ENCODE measurements at regions of chr11 and their contacts with region 1.

Region 1: GRCh38 chr11:62534779-62535545 is 11.6 kb downstream of the AHNAK start:
- DNase-seq: no peak
- H3K4me3 ChIP-seq: no peak overlapping the region
- H3K4me3 Mint-ChIP-seq: no peak overlapping the region
- H3K27ac ChIP-seq: peak overlapping the region in 1 of 2 donors; percentile 18
- H3K27ac Mint-ChIP-seq: peak overlapping the region in 2 of 7 donors; percentile 7 to 48
- H3K4me1 ChIP-seq: peaks cover 19 to 22% of the 10 kb centered on the region in 2 donors
- H3K4me1 Mint-ChIP-seq: peaks cover 21% of the 10 kb centered on the region
- H3K27me3 ChIP-seq: no peaks in the 10 kb centered on the region
- H3K27me3 Mint-ChIP-seq: peaks cover 0 to 5% (median 0%) of the 10 kb centered on the region in 3 donors
- CTCF ChIP-seq: no peak

Region 2: GRCh38 chr11:62383822-62384221 is 151.1 kb before region 1 on chr11:
- intact Hi-C with region 1: no loop called
- DNase-seq: no peak
- H3K4me3 ChIP-seq: no peak overlapping the region
- H3K4me3 Mint-ChIP-seq: no peak overlapping the region
- H3K27ac ChIP-seq: no peak overlapping the region
- H3K27ac Mint-ChIP-seq: no peak overlapping the region
- H3K4me1 ChIP-seq: peaks cover 5 to 6% of the 10 kb centered on the region in 2 donors
- H3K4me1 Mint-ChIP-seq: peaks cover 5% of the 10 kb centered on the region
- H3K27me3 ChIP-seq: no peaks in the 10 kb centered on the region
- H3K27me3 Mint-ChIP-seq: peaks cover 0 to 1% (median 0%) of the 10 kb centered on the region in 3 donors
- CTCF ChIP-seq: no peak

Region 3: GRCh38 chr11:62567018-62567633 is 32.2 kb after region 1 on chr11:
- intact Hi-C with region 1: loop called in 1 of 2 experiments (anchors 5 kb)
- DNase-seq: no peak
- H3K4me3 ChIP-seq: no peak overlapping the region
- H3K4me3 Mint-ChIP-seq: peak overlapping the region in 1 of 2 donors; percentile 39
- H3K27ac ChIP-seq: peak overlapping the region in 1 of 2 donors; percentile 59
- H3K27ac Mint-ChIP-seq: peak overlapping the region in 5 of 7 donors; percentile 15 to 81 (median 56)
- H3K4me1 ChIP-seq: peaks cover 0 to 15% of the 10 kb centered on the region in 2 donors
- H3K4me1 Mint-ChIP-seq: peaks cover 24% of the 10 kb centered on the region
- H3K27me3 ChIP-seq: no peaks in the 10 kb centered on the region
- H3K27me3 Mint-ChIP-seq: peaks cover 0 to 2% (median 0%) of the 10 kb centered on the region in 3 donors
- CTCF ChIP-seq: no peak